Activated CD4-positive, alpha-beta memory T cell treated with anti-CD3 and anti-CD28 coated beads for 36 hours (primary cell): ENCODE measurements at regions of chr14 and their contacts with region 1.

Region 1: DNA sequence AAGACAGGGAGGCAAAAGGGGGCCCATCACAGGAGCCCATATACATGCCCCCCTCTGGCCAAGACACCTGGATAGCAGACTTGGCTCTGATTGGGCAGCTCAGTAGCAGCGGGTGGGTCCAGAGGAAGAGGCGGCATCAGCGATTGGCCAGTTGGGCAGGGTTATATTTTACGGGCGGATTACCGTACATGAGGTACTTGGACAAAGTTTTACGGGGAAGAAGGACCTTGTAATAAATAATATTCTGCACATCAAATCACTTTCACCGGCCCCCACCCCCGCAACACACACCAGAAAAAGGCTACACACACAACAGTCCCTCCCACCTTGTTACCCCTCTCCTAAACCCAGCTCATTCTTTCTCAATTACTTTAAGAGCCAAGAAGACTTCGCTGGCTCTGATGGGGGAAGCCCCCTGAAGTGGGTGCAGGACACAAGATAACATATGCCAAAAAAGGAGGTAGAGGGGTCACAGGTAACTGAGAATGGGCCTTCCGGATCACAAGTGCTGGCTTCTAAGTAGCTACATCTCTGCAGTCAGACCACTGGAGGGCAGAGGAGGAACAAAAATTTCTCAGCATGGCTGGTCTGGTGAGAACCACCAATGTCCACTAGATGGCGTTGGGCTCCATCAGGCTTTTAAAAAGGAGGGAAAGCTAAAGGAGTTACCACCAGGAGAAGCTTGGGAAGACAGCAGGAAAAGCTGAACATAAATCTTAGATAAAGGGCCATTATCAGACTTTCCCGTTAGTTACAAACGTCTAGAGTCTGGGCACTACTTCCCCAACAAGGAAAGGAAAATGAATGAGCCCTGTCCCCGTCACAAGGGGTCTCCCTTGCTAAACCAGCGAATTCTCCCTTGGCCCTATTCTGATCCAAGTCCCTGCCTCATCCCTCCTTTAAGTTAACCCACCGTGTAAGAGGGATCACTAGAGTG is 11.4 kb upstream of the CDH24 start:
- DNase-seq: peak; percentile 82
- H3K4me3 Mint-ChIP-seq: no peak overlapping the region
- H3K27ac Mint-ChIP-seq: peak overlapping the region; percentile 66
- H3K4me1 Mint-ChIP-seq: peaks cover 42% of the 10 kb centered on the region
- H3K27me3 Mint-ChIP-seq: no peaks in the 10 kb centered on the region

Region 2: DNA sequence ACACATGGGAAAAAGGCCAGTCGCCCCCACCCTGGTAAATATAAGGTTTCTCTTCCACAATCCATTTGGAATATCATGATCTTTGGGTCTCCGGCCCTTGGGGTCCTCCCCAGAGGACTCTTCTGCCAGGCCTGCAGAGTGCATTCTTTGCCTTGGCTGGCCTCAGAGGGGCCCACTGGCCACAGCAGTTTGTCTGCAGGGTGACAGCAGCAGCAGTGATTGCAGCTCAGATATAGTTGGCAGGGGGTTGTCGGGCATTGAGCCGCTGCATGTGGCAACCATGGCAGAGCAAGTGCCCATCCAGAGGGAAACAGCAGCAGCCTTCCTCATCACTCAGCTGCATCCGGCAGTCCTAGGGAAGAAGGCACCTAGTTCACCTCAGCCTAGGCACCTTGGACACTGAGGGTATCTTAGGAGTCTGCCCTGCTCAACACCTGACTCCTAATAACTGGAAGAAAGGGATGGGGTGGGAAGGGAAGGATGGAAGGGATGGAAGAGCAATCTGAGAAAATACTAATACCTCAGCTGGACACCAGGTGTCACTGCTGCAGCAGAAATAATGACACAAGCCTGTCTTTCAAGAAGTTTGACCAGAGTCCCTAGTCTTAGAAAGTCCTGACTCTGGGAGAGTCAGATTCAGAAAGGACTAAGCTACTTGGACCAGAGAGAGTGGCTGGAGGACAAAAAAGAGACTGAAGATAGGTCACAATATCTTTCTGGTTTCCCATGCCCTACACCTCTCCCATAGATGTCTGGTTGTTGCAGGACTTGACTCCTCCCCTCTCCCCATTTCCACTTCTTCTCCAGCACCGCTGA is 95.3 kb before region 1 on chr14:
- CTCF ChIA-PET with region 1: interaction called, 21 read pairs
- POLR2A ChIA-PET with region 1: no interaction called
- intact Hi-C with region 1: no loop called
- DNase-seq: peak; percentile 55
- H3K4me3 Mint-ChIP-seq: no peak overlapping the region
- H3K27ac Mint-ChIP-seq: no peak overlapping the region
- H3K4me1 Mint-ChIP-seq: no peaks in the 10 kb centered on the region
- H3K27me3 Mint-ChIP-seq: no peaks in the 10 kb centered on the region

Region 3: GRCh38 chr14:23034483-23035302 is 34.1 kb before region 1 on chr14 and contains the start of gene PSMB5:
- CTCF ChIA-PET with region 1: interaction called, 22 read pairs
- POLR2A ChIA-PET with region 1: no interaction called
- intact Hi-C with region 1: no loop called
- DNase-seq: peak; percentile 94
- H3K4me3 Mint-ChIP-seq: peak within 1 kb of the TSS; percentile 95
- H3K27ac Mint-ChIP-seq: peak within 1 kb of the TSS; percentile 95
- H3K4me1 Mint-ChIP-seq: peaks cover 28% of the 10 kb centered on the region
- H3K27me3 Mint-ChIP-seq: no peaks in the 10 kb centered on the region
- total RNA-seq, gene PSMB5: 116 to 119 TPM

Region 4: GRCh38 chr14:23085458-23085857 is 16.7 kb after region 1 on chr14:
- CTCF ChIA-PET with region 1: interaction called, 92 read pairs
- POLR2A ChIA-PET with region 1: interaction called, 4 read pairs
- intact Hi-C with region 1: no loop called
- DNase-seq: peak; percentile 29
- H3K4me3 Mint-ChIP-seq: peak overlapping the region; percentile 11
- H3K27ac Mint-ChIP-seq: peak overlapping the region; percentile 90
- H3K4me1 Mint-ChIP-seq: peaks cover 44% of the 10 kb centered on the region
- H3K27me3 Mint-ChIP-seq: no peaks in the 10 kb centered on the region

Region 5: GRCh38 chr14:23114669-23115491 is 46.1 kb after region 1 on chr14:
- CTCF ChIA-PET with region 1: interaction called, 53 read pairs
- POLR2A ChIA-PET with region 1: no interaction called
- intact Hi-C with region 1: no loop called
- DNase-seq: no peak
- H3K4me3 Mint-ChIP-seq: no peak overlapping the region
- H3K27ac Mint-ChIP-seq: no peak overlapping the region
- H3K4me1 Mint-ChIP-seq: peaks cover 24% of the 10 kb centered on the region
- H3K27me3 Mint-ChIP-seq: peaks cover 2% of the 10 kb centered on the region

Region 6: DNA sequence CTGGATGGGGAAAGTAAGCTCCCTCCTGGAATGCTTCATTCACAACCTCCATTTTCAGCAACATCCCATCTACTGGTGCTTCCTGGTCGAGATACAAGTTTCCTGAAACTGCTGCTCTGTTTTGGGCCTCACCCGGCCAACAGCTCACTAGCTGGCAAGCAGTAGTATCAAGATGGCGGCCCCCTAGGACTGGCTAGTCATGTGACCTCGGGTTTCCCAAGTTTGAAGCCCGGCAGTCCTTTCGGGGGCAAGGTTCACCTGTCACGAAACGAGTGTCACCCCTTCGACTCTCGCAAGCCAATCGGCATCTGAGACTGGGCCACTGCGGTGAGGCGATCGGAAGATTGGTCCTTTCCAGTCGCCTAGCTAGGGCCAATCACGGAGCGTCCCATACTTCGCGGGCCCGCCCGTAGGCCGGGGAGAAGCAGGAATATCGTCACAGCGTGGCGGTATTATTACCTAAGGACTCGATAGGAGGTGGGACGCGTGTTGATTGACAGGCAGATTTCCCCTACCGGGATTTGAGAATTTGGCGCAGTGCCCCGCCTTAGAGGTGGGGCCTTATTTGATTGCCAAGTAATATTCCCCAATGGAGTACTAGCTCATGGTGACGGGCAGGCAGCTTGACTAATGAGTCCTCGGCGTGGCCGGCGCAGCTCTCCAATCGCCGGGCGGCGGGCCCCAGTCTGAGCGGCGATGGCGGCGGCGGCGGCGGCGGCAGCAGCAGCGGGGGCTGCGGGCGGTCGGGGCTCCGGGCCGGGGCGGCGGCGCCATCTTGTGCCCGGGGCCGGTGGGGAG is 252.2 kb after region 1 on chr14 and contains the start of gene PABPN1:
- CTCF ChIA-PET with region 1: interaction called, 12 read pairs
- POLR2A ChIA-PET with region 1: interaction called, 3 read pairs
- intact Hi-C with region 1: no loop called
- DNase-seq: peak; percentile 99
- H3K4me3 Mint-ChIP-seq: peak within 1 kb of the TSS; percentile 92
- H3K27ac Mint-ChIP-seq: peak within 1 kb of the TSS; percentile 90
- H3K4me1 Mint-ChIP-seq: peaks cover 23% of the 10 kb centered on the region
- H3K27me3 Mint-ChIP-seq: no peaks in the 10 kb centered on the region
- total RNA-seq, gene PABPN1: 198 to 209 TPM

Region 7: GRCh38 chr14:23665375-23666192 is 596.8 kb after region 1 on chr14:
- CTCF ChIA-PET with region 1: no interaction called
- POLR2A ChIA-PET with region 1: no interaction called
- intact Hi-C with region 1: no loop called
- DNase-seq: peak; percentile 23
- H3K4me3 Mint-ChIP-seq: no peak overlapping the region
- H3K27ac Mint-ChIP-seq: no peak overlapping the region
- H3K4me1 Mint-ChIP-seq: no peaks in the 10 kb centered on the region
- H3K27me3 Mint-ChIP-seq: no peaks in the 10 kb centered on the region